ENCODE measurements at regions of chr1 and their contacts with region 1.

Region 1: GRCh38 chr1:160376525-160377131 is 9.8 kb downstream of the NHLH1 start:
- DNase-seq: peak; percentile 73
- CTCF ChIP-seq: peak; percentile 91

Region 2: GRCh38 chr1:160031365-160032164 is 345.1 kb before region 1 on chr1 and contains the start of gene PIGM:
- CTCF ChIA-PET with region 1: no interaction called
- POLR2A ChIA-PET with region 1: no interaction called
- DNase-seq: peak; percentile 93
- CTCF ChIP-seq: no peak

Region 3: DNA sequence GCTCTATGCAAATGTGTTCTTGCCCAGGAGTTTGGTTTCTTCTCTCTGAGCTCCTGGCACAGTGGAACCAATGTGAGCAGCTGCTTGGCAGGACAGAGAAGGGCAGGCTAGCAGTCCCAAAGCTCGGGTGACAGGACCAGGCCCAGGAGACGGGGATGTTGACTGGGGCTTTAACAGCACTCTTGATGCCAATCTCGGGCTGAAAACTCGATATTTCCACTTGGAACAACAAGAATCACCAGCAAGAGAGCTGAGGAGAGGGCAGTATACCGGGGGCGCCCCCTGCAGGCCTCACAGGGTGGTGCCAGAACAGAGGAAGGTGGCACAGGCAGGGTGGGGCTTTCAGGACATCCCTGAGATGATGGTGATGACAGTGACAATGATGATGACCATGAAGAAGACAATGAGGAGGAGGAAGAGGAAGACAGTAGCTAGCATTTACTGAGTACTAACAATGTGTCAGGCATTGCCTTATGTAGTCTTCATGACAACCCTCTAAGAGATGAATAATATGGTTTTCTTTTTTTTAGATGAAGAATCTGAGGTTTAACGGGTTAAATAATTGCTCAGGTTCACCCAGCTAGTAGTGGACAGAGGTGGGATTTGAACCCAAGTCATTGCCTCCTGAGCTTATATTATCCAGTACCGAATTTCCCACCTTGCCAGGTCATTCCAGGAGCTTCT is 298.0 kb before region 1 on chr1:
- CTCF ChIA-PET with region 1: interaction called, 16 read pairs
- POLR2A ChIA-PET with region 1: no interaction called
- DNase-seq: peak; percentile 71
- CTCF ChIP-seq: peak; percentile 77

Region 4: DNA sequence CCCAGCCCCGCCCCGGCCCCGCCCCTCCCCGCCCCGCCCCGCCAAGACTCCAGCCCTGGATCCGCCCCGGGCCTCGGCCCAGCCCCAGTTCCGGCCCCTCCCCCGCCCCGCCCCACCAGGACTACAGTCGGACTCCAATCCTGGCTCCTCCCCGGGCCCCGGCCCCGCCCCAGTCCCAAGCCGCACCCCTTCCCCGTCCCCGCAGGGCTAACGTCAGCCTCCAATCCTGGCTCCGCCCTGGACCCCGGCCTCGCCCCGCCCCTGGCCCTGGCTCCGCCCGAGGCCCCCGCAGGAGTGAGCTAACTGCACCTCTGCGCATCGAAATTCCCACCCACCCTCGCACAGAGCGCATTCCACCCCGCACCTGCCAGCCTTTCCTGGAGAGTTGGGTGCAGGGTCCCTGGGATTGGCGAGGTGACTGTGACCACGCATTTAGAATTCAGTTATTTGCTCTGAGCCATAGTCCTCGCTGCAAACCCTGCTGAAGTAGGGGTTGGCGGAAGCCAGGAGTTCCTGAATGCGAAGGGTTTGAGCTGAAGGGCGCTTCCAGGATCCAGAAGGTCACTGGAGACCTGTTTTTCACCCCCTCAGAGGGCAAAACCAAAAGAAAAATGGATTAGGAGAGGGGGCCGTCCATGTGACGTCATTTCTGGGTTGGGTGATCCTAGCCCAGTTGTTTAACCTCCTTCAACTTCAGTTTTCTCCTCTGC is 277.6 kb before region 1 on chr1:
- CTCF ChIA-PET with region 1: interaction called, 125 read pairs
- POLR2A ChIA-PET with region 1: no interaction called
- DNase-seq: peak; percentile 100
- CTCF ChIP-seq: no peak

Region 5: DNA sequence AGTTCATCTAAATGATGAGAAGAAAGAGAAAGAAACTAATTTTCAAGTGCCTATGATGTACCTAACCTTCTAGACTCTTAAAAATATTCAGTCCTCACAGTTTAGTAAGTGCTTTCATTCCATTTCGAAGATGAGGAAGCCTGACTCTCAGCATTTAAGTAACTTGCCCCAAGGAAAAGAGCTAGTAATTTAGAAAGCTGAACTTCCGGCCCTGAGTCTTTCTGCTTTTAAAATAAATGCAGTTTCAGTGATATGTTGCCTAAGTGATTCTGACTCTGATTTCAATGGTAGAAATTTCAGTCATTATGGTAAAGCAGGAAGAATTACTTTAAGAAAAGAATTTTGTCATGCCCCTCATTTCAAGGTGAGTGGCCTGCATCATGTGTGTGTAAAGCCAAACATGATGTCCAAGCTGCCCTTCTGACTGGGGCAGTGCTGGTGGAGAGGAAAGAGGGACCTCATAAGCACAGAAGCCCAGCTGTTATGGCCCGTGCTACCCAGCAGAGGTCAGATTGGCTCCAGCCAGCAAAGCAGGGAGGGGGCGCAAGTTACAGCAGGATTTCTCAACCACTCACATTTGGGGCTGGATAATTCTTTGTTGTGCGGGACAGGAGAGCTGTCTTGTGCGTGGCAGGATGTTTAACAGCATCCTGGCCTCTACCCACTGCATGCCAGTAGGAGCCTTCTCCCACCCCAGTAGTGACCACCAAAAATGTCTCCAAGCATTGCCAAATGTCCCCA is 214.5 kb before region 1 on chr1:
- CTCF ChIA-PET with region 1: interaction called, 15 read pairs
- POLR2A ChIA-PET with region 1: no interaction called
- DNase-seq: peak; percentile 41
- CTCF ChIP-seq: peak; percentile 46

Region 6: GRCh38 chr1:160354388-160354985 is 22.1 kb before region 1 on chr1:
- CTCF ChIA-PET with region 1: interaction called, 23 read pairs
- POLR2A ChIA-PET with region 1: interaction called, 3 read pairs
- DNase-seq: no peak
- CTCF ChIP-seq: peak; percentile 40

Region 7: DNA sequence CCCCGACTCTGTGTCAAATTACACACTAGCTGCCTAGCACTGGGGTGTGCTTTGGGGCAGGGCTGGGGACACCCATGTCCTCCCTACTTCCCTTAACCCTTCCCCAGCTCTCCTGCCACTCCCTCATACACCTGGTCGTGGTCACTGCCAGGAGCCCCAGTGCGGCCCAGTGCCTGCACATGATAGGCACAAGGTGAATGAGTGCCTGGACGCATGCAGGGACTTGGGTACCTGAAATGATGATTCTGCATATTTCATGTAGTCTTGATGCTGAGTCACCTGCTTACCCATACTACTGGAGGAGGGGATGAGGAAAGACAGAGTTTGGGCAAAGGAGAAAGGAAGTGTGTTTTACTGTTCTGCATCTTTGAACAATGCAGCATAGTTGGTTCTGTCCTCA is 22.2 kb after region 1 on chr1:
- CTCF ChIA-PET with region 1: interaction called, 22 read pairs
- POLR2A ChIA-PET with region 1: no interaction called
- DNase-seq: no peak
- CTCF ChIP-seq: no peak

Measured in GM10248 (cell line).